CD4-positive, alpha-beta memory T cell (primary cell): ENCODE measurements at regions of chr1 and their contacts with region 1.

Region 1: GRCh38 chr1:24150234-24151174 is 7.6 kb upstream of the IL22RA1 start:
- DNase-seq: peak; percentile 72 to 81 (median 74)
- H3K4me3 ChIP-seq: no peak overlapping the region
- H3K4me3 Mint-ChIP-seq: peak overlapping the region; percentile 39 to 80 (median 68)
- H3K27ac ChIP-seq: no peak overlapping the region
- H3K27ac Mint-ChIP-seq: peak overlapping the region in 2 of 7 donors; percentile 1 to 75
- H3K4me1 ChIP-seq: peaks cover 10% of the 10 kb centered on the region
- H3K4me1 Mint-ChIP-seq: peaks cover 7 to 11% (median 9%) of the 10 kb centered on the region in 4 donors
- H3K27me3 ChIP-seq: no peaks in the 10 kb centered on the region
- H3K27me3 Mint-ChIP-seq: peaks cover 9 to 18% of the 10 kb centered on the region in 2 donors

Region 2: DNA sequence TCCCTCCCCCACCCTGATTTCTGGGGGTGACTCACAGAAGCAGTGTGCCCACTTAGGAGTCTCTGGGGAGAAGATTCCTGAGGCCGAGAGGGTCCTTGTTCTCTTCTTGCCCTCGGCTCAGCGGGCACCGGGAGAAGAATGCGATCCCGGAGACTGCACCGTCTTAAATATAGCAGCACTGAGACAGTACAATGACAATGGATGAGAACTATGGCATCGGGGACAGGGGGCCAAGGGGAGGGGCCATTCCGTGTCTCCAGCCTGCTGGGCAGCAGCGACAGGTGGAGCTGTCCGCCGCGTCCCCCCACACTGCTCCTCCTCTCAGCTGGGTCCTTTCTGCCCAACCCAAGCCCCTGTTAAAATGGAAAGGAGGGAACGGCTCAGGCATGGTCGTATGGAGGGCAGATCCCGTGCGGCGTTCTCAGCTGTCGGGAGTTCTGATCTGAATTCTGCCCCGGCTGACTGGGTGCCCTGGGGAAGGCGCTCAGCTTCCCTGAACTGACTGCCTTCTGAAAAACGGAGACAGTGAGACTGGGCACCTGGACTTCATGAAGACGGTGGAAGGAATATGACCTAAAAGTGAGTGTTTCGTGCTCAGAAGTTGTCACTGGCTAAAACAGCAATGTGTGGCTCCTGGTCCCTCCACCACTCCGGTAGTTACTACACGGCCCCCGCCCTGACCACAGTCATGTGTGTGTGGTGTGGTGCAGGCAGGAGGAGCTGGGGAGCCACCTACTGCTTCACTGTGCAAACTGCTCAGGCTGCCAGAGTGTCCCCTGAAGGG is 38.3 kb before region 1 on chr1 and contains the start of gene MYOM3:
- CTCF ChIA-PET with region 1: no interaction called
- POLR2A ChIA-PET with region 1: no interaction called
- intact Hi-C with region 1: no loop called
- DNase-seq: peak; percentile 30 to 52 (median 38)
- H3K4me3 ChIP-seq: no peak within 1 kb of the TSS
- H3K4me3 Mint-ChIP-seq: peak within 1 kb of the TSS in 4 of 8 donors; percentile 21 to 40 (median 32)
- H3K27ac ChIP-seq: no peak within 1 kb of the TSS
- H3K27ac Mint-ChIP-seq: peak within 1 kb of the TSS in 2 of 7 donors; percentile 27 to 74
- H3K4me1 ChIP-seq: peaks cover 3% of the 10 kb centered on the region
- H3K4me1 Mint-ChIP-seq: peaks cover 3 to 8% (median 5%) of the 10 kb centered on the region in 4 donors
- H3K27me3 ChIP-seq: no peaks in the 10 kb centered on the region
- H3K27me3 Mint-ChIP-seq: peaks cover 17 to 24% of the 10 kb centered on the region in 2 donors
- total RNA-seq, gene MYOM3: not detected

Region 3: DNA sequence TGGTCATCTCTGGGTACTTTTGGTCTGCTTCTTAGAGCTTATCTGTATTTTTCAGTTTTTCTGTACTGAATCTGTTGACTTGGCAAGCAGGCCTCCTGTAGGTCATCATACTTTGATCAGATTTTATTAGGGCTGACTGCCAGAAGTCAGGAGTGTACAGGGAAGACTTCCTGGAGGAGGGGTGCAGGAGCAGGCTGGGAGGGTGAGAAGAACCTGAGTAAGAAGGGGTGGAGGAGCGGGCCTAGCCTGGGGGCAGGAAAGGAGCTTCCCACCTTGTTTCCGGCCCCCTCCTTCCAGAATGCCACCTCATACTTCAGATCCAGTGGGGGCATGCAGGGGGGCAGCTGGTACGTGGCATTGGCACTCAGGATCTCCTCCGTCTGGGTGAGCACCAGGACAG is 10.8 kb after region 1 on chr1:
- CTCF ChIA-PET with region 1: interaction called, 15 read pairs
- POLR2A ChIA-PET with region 1: no interaction called
- intact Hi-C with region 1: no loop called
- DNase-seq: no peak
- H3K4me3 ChIP-seq: no peak overlapping the region
- H3K4me3 Mint-ChIP-seq: no peak overlapping the region
- H3K27ac ChIP-seq: no peak overlapping the region
- H3K27ac Mint-ChIP-seq: no peak overlapping the region
- H3K4me1 ChIP-seq: no peaks in the 10 kb centered on the region
- H3K4me1 Mint-ChIP-seq: no peaks in the 10 kb centered on the region
- H3K27me3 ChIP-seq: no peaks in the 10 kb centered on the region
- H3K27me3 Mint-ChIP-seq: no peaks in the 10 kb centered on the region

Region 4: GRCh38 chr1:24179251-24179840 is 28.8 kb after region 1 on chr1:
- CTCF ChIA-PET with region 1: interaction called, 11 read pairs
- POLR2A ChIA-PET with region 1: no interaction called
- intact Hi-C with region 1: no loop called
- DNase-seq: no peak
- H3K4me3 ChIP-seq: no peak overlapping the region
- H3K4me3 Mint-ChIP-seq: no peak overlapping the region
- H3K27ac ChIP-seq: no peak overlapping the region
- H3K27ac Mint-ChIP-seq: no peak overlapping the region
- H3K4me1 ChIP-seq: no peaks in the 10 kb centered on the region
- H3K4me1 Mint-ChIP-seq: peaks cover 0 to 8% (median 4%) of the 10 kb centered on the region in 4 donors
- H3K27me3 ChIP-seq: no peaks in the 10 kb centered on the region
- H3K27me3 Mint-ChIP-seq: no peaks in the 10 kb centered on the region

Region 5: GRCh38 chr1:24186993-24187805 is 36.7 kb after region 1 on chr1 and contains the start of gene IFNLR1:
- CTCF ChIA-PET with region 1: interaction called, 8 read pairs
- POLR2A ChIA-PET with region 1: no interaction called
- intact Hi-C with region 1: loop called (anchors 5 kb)
- DNase-seq: peak; percentile 42 to 75 (median 57)
- H3K4me3 ChIP-seq: peak within 1 kb of the TSS; percentile 11 to 60
- H3K4me3 Mint-ChIP-seq: peak within 1 kb of the TSS; percentile 86 to 92 (median 90)
- H3K27ac ChIP-seq: peak within 1 kb of the TSS; percentile 50
- H3K27ac Mint-ChIP-seq: peak within 1 kb of the TSS; percentile 53 to 93 (median 83)
- H3K4me1 ChIP-seq: peaks cover 27% of the 10 kb centered on the region
- H3K4me1 Mint-ChIP-seq: peaks cover 20 to 40% (median 34%) of the 10 kb centered on the region in 4 donors
- H3K27me3 ChIP-seq: no peaks in the 10 kb centered on the region
- H3K27me3 Mint-ChIP-seq: no peaks in the 10 kb centered on the region
- total RNA-seq, gene IFNLR1: 3.0 to 4.5 TPM